WTC11 (cell line): ENCODE measurements at regions of chr20 and their contacts with region 1.

Region 1: DNA sequence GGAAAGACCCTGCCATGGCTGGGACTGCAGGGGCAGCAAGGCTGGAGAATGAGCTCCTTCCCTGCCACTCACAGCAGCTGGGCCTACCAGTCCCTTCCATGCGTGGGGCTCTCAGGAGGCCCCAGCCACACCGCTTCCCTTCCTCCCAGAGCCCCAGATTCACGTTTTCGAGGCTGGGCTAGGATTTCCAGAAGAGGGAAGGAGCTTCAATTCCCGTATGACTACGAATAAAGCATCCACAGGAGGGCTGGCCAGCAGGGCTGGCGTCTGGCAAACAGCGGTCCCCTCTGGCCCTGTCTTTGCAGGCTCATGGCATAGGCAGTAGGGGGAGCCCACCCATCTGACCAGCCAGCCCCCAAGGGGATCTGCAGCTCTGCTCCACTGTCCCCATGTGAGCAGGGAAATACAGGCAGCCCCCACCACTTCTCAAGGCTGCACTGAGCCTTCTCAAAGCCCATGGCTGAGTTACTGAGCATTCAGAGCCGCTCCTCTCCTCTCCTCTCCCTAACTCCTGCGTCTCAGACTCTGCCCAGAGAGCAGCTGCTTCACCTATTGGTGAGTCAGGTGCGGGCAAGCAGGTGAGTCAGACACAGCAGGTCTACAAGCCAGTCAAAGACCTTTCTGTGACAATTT is 53.1 kb downstream of the NINL start:
- DNase-seq: peak; percentile 55
- ATAC-seq: peak; percentile 93
- H3K4me3 Mint-ChIP-seq: no peak overlapping the region
- H3K27ac Mint-ChIP-seq: peak overlapping the region; percentile 46
- H3K4me1 Mint-ChIP-seq: peaks cover 34% of the 10 kb centered on the region
- H3K27me3 Mint-ChIP-seq: peaks cover 3% of the 10 kb centered on the region; the same call in 1 of the 2 replicates
- CTCF ChIP-seq: no peak

Region 2: GRCh38 chr20:25521382-25521781 is 10.9 kb before region 1 on chr20:
- CTCF ChIA-PET with region 1: interaction called, 11 read pairs
- POLR2A ChIA-PET with region 1: no interaction called
- DNase-seq: no peak
- ATAC-seq: no peak
- H3K4me3 Mint-ChIP-seq: no peak overlapping the region
- H3K27ac Mint-ChIP-seq: no peak overlapping the region
- H3K4me1 Mint-ChIP-seq: no peaks in the 10 kb centered on the region
- H3K27me3 Mint-ChIP-seq: no peaks in the 10 kb centered on the region
- CTCF ChIP-seq: no peak

Region 3: GRCh38 chr20:25571240-25571639 is 39.0 kb after region 1 on chr20:
- CTCF ChIA-PET with region 1: no interaction called
- POLR2A ChIA-PET with region 1: no interaction called
- DNase-seq: no peak
- ATAC-seq: no peak
- H3K4me3 Mint-ChIP-seq: no peak overlapping the region
- H3K27ac Mint-ChIP-seq: peak overlapping the region; percentile 46; the same call in 1 of the 2 replicates
- H3K4me1 Mint-ChIP-seq: peaks cover 24% of the 10 kb centered on the region
- H3K27me3 Mint-ChIP-seq: no peaks in the 10 kb centered on the region
- CTCF ChIP-seq: no peak